Right ventricle myocardium superior (tissue), 1 donor: ENCODE measurements at regions of chr5 and their contacts with region 1.

Region 1: DNA sequence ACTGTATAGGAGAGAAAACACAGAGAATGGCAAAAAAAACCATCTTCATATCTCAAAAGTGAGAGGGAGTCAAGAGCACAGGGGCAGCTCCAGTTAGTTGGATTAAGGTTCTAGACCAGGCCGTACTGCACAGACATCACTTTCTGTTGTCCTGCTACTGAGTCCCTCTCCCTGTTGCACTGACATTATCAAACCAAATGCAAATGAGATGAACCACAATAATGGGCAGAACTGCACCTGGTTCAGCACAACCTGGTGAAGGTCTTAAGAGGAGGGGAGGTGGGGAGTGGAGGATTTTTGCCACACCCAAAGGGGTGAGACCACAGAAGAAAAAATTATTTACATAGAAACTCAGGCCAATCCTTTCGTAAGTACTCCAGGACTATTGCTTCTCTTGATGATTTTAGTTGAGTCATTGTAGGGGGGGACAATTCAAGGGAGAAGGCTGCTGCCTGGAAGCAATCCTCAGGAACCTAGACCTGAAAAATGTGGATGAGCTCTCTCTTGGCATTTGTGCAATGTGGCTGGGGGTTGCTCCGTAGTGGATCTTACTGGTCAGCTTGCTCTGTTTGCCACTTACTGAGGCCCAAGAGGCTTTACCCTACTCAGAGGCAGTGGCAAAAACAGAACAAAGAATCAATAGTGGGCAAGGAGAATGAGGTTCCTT is 94.5 kb upstream of the PPP1R2B start:
- DNase-seq: no peak
- ATAC-seq: no peak

Region 2: GRCh38 chr5:156595132-156595787 is 160.3 kb before region 1 on chr5:
- intact Hi-C with region 1: loop called (anchors 10 kb)
- DNase-seq: peak; percentile 75
- ATAC-seq: peak; percentile 95